CD4-positive, alpha-beta memory T cell (primary cell): ENCODE measurements at regions of chr9 and their contacts with region 1.

Region 1: DNA sequence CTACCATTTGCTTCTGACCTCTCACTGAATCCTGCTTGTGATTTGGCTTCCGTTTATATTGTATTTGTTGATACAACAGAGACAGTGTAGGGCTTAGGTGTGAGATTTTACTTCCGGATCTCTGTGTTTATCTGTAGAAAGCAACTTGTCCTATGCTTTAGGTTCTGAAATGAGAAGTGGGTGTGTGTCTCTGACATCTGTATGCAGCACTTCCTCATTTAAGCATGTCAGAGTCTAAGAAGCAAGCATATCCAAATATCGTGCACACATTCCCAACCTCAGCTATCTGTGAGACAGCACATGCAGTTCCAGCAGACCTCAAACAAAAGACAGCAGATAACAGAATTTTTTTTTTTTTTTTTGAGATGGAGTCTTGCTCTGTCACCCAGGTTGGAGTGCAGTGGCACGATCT is 16.3 kb downstream of the KLF9 start:
- DNase-seq: peak; percentile 42 to 56 (median 54)
- H3K4me3 ChIP-seq: peak overlapping the region in 1 of 2 donors; percentile 0
- H3K4me3 Mint-ChIP-seq: peak overlapping the region; percentile 60 to 81 (median 76)
- H3K27ac ChIP-seq: peak overlapping the region; percentile 46
- H3K27ac Mint-ChIP-seq: peak overlapping the region; percentile 53 to 92 (median 78)
- H3K4me1 ChIP-seq: peaks cover 83% of the 10 kb centered on the region
- H3K4me1 Mint-ChIP-seq: peaks cover 53 to 82% (median 68%) of the 10 kb centered on the region in 4 donors
- H3K27me3 ChIP-seq: no peaks in the 10 kb centered on the region
- H3K27me3 Mint-ChIP-seq: no peaks in the 10 kb centered on the region

Region 2: DNA sequence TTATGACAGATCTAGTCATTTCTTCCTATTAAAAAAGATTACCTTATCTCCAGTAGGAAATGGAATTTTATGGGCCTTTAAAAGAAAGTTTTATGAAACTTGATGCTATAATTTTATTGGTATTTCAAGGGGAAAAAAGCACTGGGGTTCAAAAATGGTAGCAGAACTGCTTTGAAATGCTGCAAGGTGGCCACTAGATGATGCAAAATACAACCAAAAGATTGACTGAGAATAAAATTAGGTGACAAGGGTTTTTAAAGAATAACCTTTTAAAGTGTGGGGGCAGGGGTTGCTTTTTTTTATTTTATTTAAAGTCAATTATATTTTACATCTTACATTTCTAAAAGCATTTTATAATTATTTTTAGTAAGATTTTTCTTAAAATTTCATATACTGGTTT is 45.3 kb before region 1 on chr9:
- CTCF ChIA-PET with region 1: no interaction called
- POLR2A ChIA-PET with region 1: no interaction called
- intact Hi-C with region 1: loop called (anchors 5 kb)
- DNase-seq: peak in 4 of 5 donors; percentile 14 to 31 (median 24)
- H3K4me3 ChIP-seq: no peak overlapping the region
- H3K4me3 Mint-ChIP-seq: no peak overlapping the region
- H3K27ac ChIP-seq: no peak overlapping the region
- H3K27ac Mint-ChIP-seq: peak overlapping the region in 1 of 7 donors; percentile 11
- H3K4me1 ChIP-seq: no peaks in the 10 kb centered on the region
- H3K4me1 Mint-ChIP-seq: peaks cover 0 to 2% (median under 1%) of the 10 kb centered on the region in 4 donors
- H3K27me3 ChIP-seq: no peaks in the 10 kb centered on the region
- H3K27me3 Mint-ChIP-seq: no peaks in the 10 kb centered on the region